Heart left ventricle (tissue), 16 donors: ENCODE measurements at regions of chr2 and their contacts with region 1.

Region 1: GRCh38 chr2:228318218-228318617 is 136.7 kb upstream of the SPHKAP start:
- DNase-seq: peak in 4 of 5 donors; percentile 16 to 48 (median 32)
- ATAC-seq: peak; percentile 61 to 88 (median 80)
- H3K4me3 ChIP-seq: no peak overlapping the region
- H3K27ac ChIP-seq: peak overlapping the region in 1 of 12 donors; percentile 43
- H3K4me1 ChIP-seq: peaks cover 0 to 19% (median 9%) of the 10 kb centered on the region in 12 donors
- H3K27me3 ChIP-seq: no peaks in the 10 kb centered on the region
- CTCF ChIP-seq: peak; percentile 20 to 58 (median 44)
- POLR2A ChIP-seq: no peak

Region 2: DNA sequence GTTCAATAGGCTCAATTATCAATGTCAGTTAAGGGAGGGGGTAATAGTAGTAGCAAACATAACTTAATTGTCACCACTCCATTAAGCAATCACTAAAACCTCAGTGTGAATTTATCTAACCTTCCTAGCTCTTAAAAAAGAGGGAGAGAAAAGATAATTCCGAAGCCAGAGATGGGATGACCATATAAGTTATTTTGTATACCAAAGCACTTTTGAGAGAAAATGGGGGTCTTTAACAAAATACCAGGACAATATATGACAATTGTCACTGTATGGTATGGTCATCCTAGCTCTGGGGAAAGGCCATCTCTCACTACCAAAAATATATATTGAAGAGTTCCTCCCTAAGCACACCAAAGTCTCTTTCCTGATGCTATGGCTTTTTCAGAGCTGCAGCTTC is 191.8 kb before region 1 on chr2:
- intact Hi-C with region 1: no loop called
- DNase-seq: no peak
- ATAC-seq: no peak
- H3K4me3 ChIP-seq: no peak overlapping the region
- H3K27ac ChIP-seq: no peak overlapping the region
- H3K4me1 ChIP-seq: peaks cover 0 to 4% (median 0%) of the 10 kb centered on the region in 12 donors
- H3K27me3 ChIP-seq: no peaks in the 10 kb centered on the region
- CTCF ChIP-seq: no peak
- POLR2A ChIP-seq: no peak

Region 3: DNA sequence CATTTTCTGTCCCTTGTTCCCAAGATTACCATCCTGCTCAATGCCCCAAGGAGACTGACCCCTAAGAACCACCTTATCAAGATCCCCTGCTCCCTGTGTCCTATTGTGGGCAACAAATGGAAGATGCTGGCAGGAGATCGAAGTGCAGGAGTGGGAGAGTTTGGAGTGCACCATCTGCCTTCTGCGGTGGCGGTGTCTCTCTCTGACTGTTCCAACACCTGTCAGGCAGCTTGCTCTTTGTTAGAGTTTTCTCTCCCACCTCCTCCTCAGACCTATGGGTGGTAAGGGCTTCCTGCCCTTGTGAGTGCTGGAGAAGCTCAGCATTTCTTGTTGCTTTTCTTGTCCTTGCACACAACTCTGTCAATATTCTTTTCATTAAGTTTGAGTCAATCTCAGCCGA is 72.6 kb before region 1 on chr2:
- intact Hi-C with region 1: no loop called
- DNase-seq: no peak
- ATAC-seq: no peak
- H3K4me3 ChIP-seq: no peak overlapping the region
- H3K27ac ChIP-seq: no peak overlapping the region
- H3K4me1 ChIP-seq: no peaks in the 10 kb centered on the region
- H3K27me3 ChIP-seq: no peaks in the 10 kb centered on the region
- CTCF ChIP-seq: no peak
- POLR2A ChIP-seq: no peak

Region 4: DNA sequence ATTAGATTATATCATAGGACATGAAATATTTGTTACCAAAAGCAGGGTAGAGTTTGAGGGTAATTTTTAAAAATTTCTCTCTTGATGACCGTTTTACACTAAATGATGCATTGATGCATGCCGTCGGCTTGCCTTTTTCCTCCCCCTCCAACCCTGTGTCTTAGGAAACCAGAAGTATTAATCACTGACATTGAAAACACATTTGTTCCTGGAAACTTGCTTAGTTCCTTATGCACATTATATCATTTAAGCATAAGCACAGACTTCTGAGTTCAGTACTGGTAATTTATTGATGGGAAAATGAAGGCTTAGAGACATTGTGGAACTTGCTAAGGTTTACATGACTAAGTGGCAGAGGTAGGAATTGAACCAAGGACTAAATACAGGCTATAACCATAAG is 69.6 kb after region 1 on chr2:
- intact Hi-C with region 1: no loop called
- DNase-seq: no peak
- ATAC-seq: no peak
- H3K4me3 ChIP-seq: no peak overlapping the region
- H3K27ac ChIP-seq: no peak overlapping the region
- H3K4me1 ChIP-seq: no peaks in the 10 kb centered on the region
- H3K27me3 ChIP-seq: no peaks in the 10 kb centered on the region
- CTCF ChIP-seq: no peak
- POLR2A ChIP-seq: no peak

Region 5: GRCh38 chr2:228652366-228652765 is 334.1 kb after region 1 on chr2:
- intact Hi-C with region 1: loop called in 7 of 10 experiments (anchors 5 to 10 kb)
- DNase-seq: no peak
- ATAC-seq: no peak
- H3K4me3 ChIP-seq: no peak overlapping the region
- H3K27ac ChIP-seq: no peak overlapping the region
- H3K4me1 ChIP-seq: peaks cover 0 to 14% (median 0%) of the 10 kb centered on the region in 12 donors
- H3K27me3 ChIP-seq: no peaks in the 10 kb centered on the region
- CTCF ChIP-seq: no peak
- POLR2A ChIP-seq: no peak

Region 6: DNA sequence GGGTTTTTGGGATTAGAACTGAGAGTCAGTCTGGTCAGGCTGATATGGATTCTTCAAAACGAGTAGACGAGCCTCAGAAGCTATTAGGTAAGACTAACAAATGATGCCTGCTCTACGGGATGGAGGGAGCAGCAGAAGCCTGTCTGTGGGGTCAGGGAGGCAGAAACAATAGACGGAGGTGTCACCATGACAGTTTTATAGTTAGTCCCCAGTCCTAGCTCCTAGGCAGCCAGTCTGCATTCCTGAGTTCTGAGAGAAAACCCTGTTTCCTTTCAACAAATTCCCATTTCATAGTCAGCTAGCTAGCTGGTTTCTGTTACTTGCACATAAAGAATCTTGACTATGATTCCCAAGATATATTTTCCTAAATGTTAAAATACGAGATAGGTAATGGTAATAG is 410.7 kb after region 1 on chr2:
- intact Hi-C with region 1: no loop called
- DNase-seq: no peak
- ATAC-seq: no peak
- H3K4me3 ChIP-seq: no peak overlapping the region
- H3K27ac ChIP-seq: no peak overlapping the region
- H3K4me1 ChIP-seq: no peaks in the 10 kb centered on the region
- H3K27me3 ChIP-seq: no peaks in the 10 kb centered on the region
- CTCF ChIP-seq: no peak
- POLR2A ChIP-seq: no peak